Right ventricle myocardium inferior (tissue), 1 donor: ENCODE measurements at regions of chr4 and their contacts with region 1.

Region 1: GRCh38 chr4:337143-337931 is at the start of gene ZNF141:
- DNase-seq: peak; percentile 96
- ATAC-seq: peak; percentile 98
- total RNA-seq, gene ZNF141: 7.5 TPM

Region 2: GRCh38 chr4:242121-242848 is 95.1 kb before region 1 on chr4:
- intact Hi-C with region 1: loop called (anchors 5 kb)
- DNase-seq: peak; percentile 85
- ATAC-seq: peak; percentile 88